Vagina (tissue), 2 donors: ENCODE measurements at regions of chr9 and their contacts with region 1.

Region 1: DNA sequence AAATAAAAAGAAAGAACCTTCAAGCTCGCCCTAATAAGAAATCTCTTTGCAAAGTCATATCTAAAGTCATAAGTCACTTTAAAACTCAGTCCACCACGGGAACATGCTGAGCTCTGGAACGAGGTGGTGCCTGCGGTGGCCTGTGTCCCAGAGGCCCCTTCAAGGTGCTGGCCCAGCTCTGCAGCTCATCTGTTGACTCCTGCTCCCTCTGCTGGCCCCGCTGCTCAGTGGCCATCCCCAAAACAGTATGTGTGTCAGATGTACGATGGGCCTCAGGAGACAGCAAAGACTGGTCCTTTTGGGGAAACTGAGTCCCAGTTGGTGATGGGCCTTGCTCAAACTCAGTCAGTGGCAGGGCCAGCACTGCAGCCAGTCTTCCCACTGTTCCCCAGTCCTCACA is 22.8 kb upstream of the FOXB2 start:
- DNase-seq: peak in 1 of 2 donors; percentile 77
- H3K4me3 ChIP-seq: no peak overlapping the region
- H3K27ac ChIP-seq: no peak overlapping the region
- H3K4me1 ChIP-seq: no peaks in the 10 kb centered on the region
- H3K27me3 ChIP-seq: no peaks in the 10 kb centered on the region
- CTCF ChIP-seq: peak in 2 of 3 experiments; percentile 25 to 27
- POLR2A ChIP-seq: no peak

Region 2: DNA sequence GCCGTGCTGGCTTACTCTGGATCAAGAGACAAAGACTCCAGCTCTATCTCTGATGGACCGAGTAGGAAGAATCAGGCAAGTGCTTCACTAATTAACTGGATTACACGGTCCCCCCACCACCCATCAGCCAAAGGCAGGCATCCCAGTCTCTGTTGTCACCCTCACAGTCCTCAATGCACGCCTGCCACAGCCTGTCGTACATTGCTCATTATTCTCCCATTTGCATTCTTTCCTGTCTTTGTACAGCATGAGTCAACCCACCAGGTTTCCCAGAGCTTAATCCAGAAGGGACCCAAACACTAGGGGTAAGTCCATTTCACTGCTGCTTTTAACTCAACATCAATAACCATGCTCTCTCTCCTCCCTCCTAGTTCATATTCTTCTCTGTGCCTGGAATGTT is 188.1 kb before region 1 on chr9:
- intact Hi-C with region 1: loop called (anchors 5 kb)
- DNase-seq: no peak
- H3K4me3 ChIP-seq: no peak overlapping the region
- H3K27ac ChIP-seq: no peak overlapping the region
- H3K4me1 ChIP-seq: no peaks in the 10 kb centered on the region
- H3K27me3 ChIP-seq: no peaks in the 10 kb centered on the region
- CTCF ChIP-seq: no peak
- POLR2A ChIP-seq: no peak